ENCODE measurements at regions of chr15 and their contacts with region 1.

Region 1: DNA sequence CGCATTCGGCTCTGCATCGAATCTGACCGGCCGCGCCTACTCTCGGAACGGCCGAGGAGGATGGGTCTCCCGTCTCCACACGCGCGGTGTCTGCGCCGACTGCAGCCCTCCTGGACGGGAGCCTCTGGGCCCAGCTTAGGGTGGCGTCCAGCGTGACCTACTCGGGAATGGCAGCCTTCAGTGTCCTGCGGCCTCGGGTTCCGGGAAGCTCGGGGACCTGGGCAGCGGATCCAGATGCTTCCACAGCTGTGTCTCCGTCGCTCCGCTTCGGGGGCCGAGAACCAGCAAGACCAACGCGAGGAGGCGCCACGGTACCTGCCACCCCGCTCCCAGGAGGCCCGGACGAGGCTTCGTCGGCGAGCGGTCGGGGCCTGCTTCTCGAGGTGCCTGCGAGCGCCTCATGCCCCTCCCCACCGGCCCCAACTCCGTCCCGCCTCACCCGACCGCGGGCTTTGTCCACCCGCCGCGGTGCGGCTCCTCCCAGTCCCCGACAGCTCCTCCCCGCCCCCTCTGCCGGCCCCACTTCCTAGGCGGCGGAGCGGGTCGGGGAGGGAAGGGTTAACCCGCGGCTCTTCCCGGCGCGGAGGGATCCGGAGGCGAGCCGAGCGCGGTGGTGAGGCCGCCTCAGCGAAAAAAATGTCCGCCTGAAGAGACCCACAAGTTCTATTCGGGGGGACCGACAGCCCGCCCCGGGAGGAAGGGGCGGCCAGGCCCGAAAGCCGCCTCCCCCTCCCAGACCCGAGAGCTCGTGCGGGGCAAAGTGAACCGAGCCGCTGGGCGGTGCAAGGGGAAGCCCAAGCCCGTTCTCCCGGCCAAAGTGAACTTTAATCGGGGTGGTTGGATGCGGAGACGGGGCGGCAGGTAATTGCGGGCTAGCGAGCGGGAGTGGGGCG is at the start of gene TCF12:
- DNase-seq: peak; percentile 96
- ATAC-seq: peak; percentile 93
- H3K4me3 Mint-ChIP-seq: peak within 1 kb of the TSS; percentile 86
- H3K27ac Mint-ChIP-seq: no peak within 1 kb of the TSS
- H3K4me1 Mint-ChIP-seq: peaks cover 37% of the 10 kb centered on the region
- H3K27me3 Mint-ChIP-seq: peaks cover 17% of the 10 kb centered on the region
- CTCF ChIP-seq: no peak
- total RNA-seq, gene TCF12: 73.2 to 92.9 TPM (median 81.3 TPM) in 3 replicates

Region 2: GRCh38 chr15:56869573-56869972 is 48.7 kb before region 1 on chr15:
- CTCF ChIA-PET with region 1: no interaction called
- POLR2A ChIA-PET with region 1: no interaction called
- DNase-seq: peak; percentile 45
- ATAC-seq: no peak
- H3K4me3 Mint-ChIP-seq: no peak overlapping the region
- H3K27ac Mint-ChIP-seq: no peak overlapping the region
- H3K4me1 Mint-ChIP-seq: peaks cover 13% of the 10 kb centered on the region
- H3K27me3 Mint-ChIP-seq: no peaks in the 10 kb centered on the region
- CTCF ChIP-seq: peak; percentile 78

Region 3: DNA sequence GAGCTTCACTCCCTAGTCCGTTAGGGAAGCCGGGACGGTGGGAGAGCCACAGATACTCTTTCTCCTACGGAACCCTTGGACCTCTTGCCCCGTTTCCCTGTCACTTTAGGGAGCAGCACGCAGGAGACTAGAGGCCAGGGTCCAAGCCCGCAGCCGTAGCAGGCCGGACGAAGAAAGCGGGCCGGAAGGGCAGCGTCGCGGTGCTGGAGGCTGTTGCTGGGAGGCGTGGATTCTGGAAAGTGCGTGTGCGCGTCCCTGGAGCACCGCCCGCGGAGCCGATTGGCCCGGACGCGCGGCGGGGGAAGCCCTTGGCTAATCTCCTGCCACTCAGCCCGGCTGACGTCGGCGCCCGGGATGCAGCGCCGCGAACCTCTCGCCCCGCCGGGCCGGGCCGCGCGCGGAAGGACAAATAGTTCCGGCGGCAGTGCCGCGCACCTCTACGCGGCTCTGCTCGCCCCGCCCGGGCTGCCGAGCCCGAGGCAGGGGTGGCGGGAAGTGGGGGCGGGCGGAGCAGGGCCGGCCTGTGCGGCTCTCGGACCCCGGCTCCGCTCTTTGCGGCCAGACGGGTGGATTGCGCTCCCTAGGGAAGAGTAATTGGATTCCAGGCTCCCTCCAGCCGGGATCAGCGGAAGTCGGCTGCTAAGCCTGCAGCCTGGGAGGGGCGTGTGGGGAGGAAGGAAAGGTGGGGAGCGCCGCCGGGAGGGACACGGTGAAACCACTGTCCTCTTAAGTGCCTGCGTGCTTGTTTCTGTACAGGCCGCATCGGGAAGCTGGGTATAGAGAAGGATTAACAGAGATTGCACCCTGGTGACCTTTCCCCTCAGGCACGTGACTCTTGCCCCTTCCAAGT is 31.1 kb before region 1 on chr15:
- CTCF ChIA-PET with region 1: interaction called, 4 read pairs
- POLR2A ChIA-PET with region 1: interaction called, 25 read pairs
- DNase-seq: peak; percentile 89
- ATAC-seq: peak; percentile 88
- H3K4me3 Mint-ChIP-seq: peak overlapping the region; percentile 83
- H3K27ac Mint-ChIP-seq: peak overlapping the region; percentile 95
- H3K4me1 Mint-ChIP-seq: peaks cover 28% of the 10 kb centered on the region
- H3K27me3 Mint-ChIP-seq: peaks cover 19% of the 10 kb centered on the region
- CTCF ChIP-seq: no peak

Measured in WTC11 (cell line).